Activated CD4-positive, alpha-beta memory T cell treated with anti-CD3 and anti-CD28 coated beads, Interleukin-2, amount 10 ng/mL, durations not matched to agents 7 days and 5 days (primary cell): ENCODE measurements at regions of chr1 and their contacts with region 1.

Region 1: GRCh38 chr1:92994105-92994712 is 32.9 kb upstream of the DIPK1A start:
- DNase-seq: peak; percentile 74
- H3K4me3 Mint-ChIP-seq: no peak overlapping the region
- H3K27ac Mint-ChIP-seq: no peak overlapping the region
- H3K4me1 Mint-ChIP-seq: peaks cover 51% of the 10 kb centered on the region
- H3K27me3 Mint-ChIP-seq: peaks cover 4% of the 10 kb centered on the region

Region 2: GRCh38 chr1:92831762-92832536 is 162.3 kb before region 1 on chr1 and contains the start of gene RPL5:
- CTCF ChIA-PET with region 1: interaction called, 13 read pairs
- POLR2A ChIA-PET with region 1: interaction called, 8 read pairs
- DNase-seq: peak; percentile 97
- H3K4me3 Mint-ChIP-seq: peak within 1 kb of the TSS; percentile 92
- H3K27ac Mint-ChIP-seq: peak within 1 kb of the TSS; percentile 84
- H3K4me1 Mint-ChIP-seq: peaks cover 50% of the 10 kb centered on the region
- H3K27me3 Mint-ChIP-seq: no peaks in the 10 kb centered on the region
- total RNA-seq, gene RPL5: 660 to 678 TPM

Region 3: GRCh38 chr1:92858564-92859399 is 135.4 kb before region 1 on chr1:
- CTCF ChIA-PET with region 1: interaction called, 84 read pairs
- POLR2A ChIA-PET with region 1: interaction called, 10 read pairs
- DNase-seq: peak; percentile 51
- H3K4me3 Mint-ChIP-seq: peak overlapping the region; percentile 32
- H3K27ac Mint-ChIP-seq: peak overlapping the region; percentile 19
- H3K4me1 Mint-ChIP-seq: peaks cover 27% of the 10 kb centered on the region
- H3K27me3 Mint-ChIP-seq: no peaks in the 10 kb centered on the region

Region 4: GRCh38 chr1:92877792-92878191 is 116.4 kb before region 1 on chr1:
- CTCF ChIA-PET with region 1: interaction called, 19 read pairs
- POLR2A ChIA-PET with region 1: no interaction called
- DNase-seq: no peak
- H3K4me3 Mint-ChIP-seq: peak overlapping the region; percentile 5
- H3K27ac Mint-ChIP-seq: peak overlapping the region; percentile 64
- H3K4me1 Mint-ChIP-seq: peaks cover 28% of the 10 kb centered on the region
- H3K27me3 Mint-ChIP-seq: no peaks in the 10 kb centered on the region

Region 5: GRCh38 chr1:92929461-92929860 is 64.7 kb before region 1 on chr1:
- CTCF ChIA-PET with region 1: no interaction called
- POLR2A ChIA-PET with region 1: no interaction called
- DNase-seq: no peak
- H3K4me3 Mint-ChIP-seq: no peak overlapping the region
- H3K27ac Mint-ChIP-seq: no peak overlapping the region
- H3K4me1 Mint-ChIP-seq: peaks cover 20% of the 10 kb centered on the region
- H3K27me3 Mint-ChIP-seq: no peaks in the 10 kb centered on the region

Region 6: GRCh38 chr1:92968138-92969032 is 25.8 kb before region 1 on chr1:
- CTCF ChIA-PET with region 1: interaction called, 176 read pairs
- POLR2A ChIA-PET with region 1: interaction called, 82 read pairs
- DNase-seq: no peak
- H3K4me3 Mint-ChIP-seq: no peak overlapping the region
- H3K27ac Mint-ChIP-seq: no peak overlapping the region
- H3K4me1 Mint-ChIP-seq: peaks cover 31% of the 10 kb centered on the region
- H3K27me3 Mint-ChIP-seq: no peaks in the 10 kb centered on the region

Region 7: GRCh38 chr1:92980732-92981647 is 13.2 kb before region 1 on chr1:
- CTCF ChIA-PET with region 1: interaction called, 39 read pairs
- POLR2A ChIA-PET with region 1: interaction called, 31 read pairs
- DNase-seq: peak; percentile 62
- H3K4me3 Mint-ChIP-seq: peak overlapping the region; percentile 59
- H3K27ac Mint-ChIP-seq: peak overlapping the region; percentile 97
- H3K4me1 Mint-ChIP-seq: peaks cover 58% of the 10 kb centered on the region
- H3K27me3 Mint-ChIP-seq: no peaks in the 10 kb centered on the region

Region 8: GRCh38 chr1:93042187-93043056 is 48.2 kb after region 1 on chr1:
- CTCF ChIA-PET with region 1: interaction called, 10 read pairs
- POLR2A ChIA-PET with region 1: no interaction called
- DNase-seq: peak; percentile 35
- H3K4me3 Mint-ChIP-seq: peak overlapping the region; percentile 70
- H3K27ac Mint-ChIP-seq: peak overlapping the region; percentile 90
- H3K4me1 Mint-ChIP-seq: peaks cover 39% of the 10 kb centered on the region
- H3K27me3 Mint-ChIP-seq: no peaks in the 10 kb centered on the region